ENCODE measurements at regions of chr1 and their contacts with region 1.

Region 1: GRCh38 chr1:235971571-235972310 is 93.1 kb downstream of the NID1 start:
- DNase-seq: peak; percentile 88
- H3K4me3 Mint-ChIP-seq: peak overlapping the region; percentile 2
- H3K27ac Mint-ChIP-seq: no peak overlapping the region
- H3K4me1 Mint-ChIP-seq: peaks cover 19% of the 10 kb centered on the region
- H3K27me3 Mint-ChIP-seq: no peaks in the 10 kb centered on the region
- CTCF ChIP-seq: peak; percentile 83

Region 2: DNA sequence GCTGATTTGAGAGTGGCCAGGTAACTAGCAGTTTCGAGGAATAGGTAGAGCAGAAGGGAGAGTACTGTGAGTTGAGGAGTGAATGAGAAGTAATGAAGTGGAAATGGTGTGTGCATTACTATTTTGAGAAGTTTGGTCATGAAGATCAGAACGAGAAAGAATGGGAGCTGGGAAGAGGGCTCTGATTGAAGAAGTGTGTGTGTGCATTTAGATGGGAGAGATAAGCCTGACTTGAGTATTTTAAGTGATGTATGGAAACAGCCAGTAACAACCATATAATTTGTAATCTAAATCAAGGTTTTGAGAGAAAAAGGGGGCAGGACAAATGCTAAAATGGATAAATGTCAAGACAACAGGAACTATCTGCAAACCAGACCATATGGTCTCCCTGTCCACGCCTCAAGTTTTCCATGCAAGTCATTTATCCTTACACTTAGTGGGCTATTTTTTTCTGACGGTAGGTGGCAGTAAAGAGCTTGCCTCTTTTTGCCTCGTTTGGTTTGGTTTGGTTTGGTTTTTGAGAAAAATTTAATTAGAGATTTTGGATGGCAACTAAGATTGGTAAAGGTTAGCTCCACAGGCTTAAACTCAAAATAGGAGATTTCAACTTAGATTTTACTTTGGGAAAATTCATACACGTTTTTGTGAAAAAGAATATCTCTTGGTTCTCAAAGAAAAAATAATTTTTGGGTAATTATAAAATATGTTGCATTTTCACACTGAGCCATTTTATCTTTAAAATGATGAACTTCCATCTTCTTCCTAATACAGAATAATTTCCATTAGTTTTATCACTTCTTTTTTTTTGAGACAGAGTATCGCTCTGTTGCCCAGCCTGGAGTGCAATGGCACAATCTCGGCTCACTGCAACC is 458.0 kb before region 1 on chr1:
- CTCF ChIA-PET with region 1: interaction called, 4 read pairs
- intact Hi-C with region 1: loop called (anchors 2 kb)
- DNase-seq: peak; percentile 69
- H3K4me3 Mint-ChIP-seq: no peak overlapping the region
- H3K27ac Mint-ChIP-seq: no peak overlapping the region
- H3K4me1 Mint-ChIP-seq: peaks cover 7% of the 10 kb centered on the region
- H3K27me3 Mint-ChIP-seq: peaks cover 14% of the 10 kb centered on the region
- CTCF ChIP-seq: peak; percentile 83

Region 3: DNA sequence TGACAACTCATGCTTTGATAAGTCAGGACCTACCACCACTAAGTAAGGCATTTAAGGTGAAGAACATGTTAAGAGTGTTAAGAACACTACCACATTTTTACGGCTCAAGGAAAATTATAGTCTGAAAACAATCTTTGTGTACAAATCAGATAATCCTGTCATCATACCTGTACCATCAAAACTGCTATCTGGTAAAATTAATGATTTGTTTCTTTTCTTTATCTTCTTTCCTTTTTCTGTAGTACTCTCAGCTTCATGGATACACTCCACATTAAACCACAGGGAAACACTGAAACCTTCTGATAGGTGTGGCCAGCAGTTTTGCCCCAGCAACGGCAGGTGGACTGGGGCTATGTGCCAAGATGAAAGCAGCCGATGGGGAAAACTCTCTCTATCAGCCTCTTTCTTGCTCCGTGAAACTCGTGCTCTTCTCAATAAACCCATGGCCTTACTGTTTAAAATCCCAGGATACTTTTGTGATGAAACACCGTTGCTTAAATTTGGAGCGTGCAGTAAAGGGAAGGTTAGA is 180.1 kb before region 1 on chr1:
- CTCF ChIA-PET with region 1: interaction called, 4 read pairs
- intact Hi-C with region 1: loop called (anchors 2 kb)
- DNase-seq: peak; percentile 11
- H3K4me3 Mint-ChIP-seq: no peak overlapping the region
- H3K27ac Mint-ChIP-seq: no peak overlapping the region
- H3K4me1 Mint-ChIP-seq: peaks cover 10% of the 10 kb centered on the region
- H3K27me3 Mint-ChIP-seq: no peaks in the 10 kb centered on the region
- CTCF ChIP-seq: no peak

Region 4: DNA sequence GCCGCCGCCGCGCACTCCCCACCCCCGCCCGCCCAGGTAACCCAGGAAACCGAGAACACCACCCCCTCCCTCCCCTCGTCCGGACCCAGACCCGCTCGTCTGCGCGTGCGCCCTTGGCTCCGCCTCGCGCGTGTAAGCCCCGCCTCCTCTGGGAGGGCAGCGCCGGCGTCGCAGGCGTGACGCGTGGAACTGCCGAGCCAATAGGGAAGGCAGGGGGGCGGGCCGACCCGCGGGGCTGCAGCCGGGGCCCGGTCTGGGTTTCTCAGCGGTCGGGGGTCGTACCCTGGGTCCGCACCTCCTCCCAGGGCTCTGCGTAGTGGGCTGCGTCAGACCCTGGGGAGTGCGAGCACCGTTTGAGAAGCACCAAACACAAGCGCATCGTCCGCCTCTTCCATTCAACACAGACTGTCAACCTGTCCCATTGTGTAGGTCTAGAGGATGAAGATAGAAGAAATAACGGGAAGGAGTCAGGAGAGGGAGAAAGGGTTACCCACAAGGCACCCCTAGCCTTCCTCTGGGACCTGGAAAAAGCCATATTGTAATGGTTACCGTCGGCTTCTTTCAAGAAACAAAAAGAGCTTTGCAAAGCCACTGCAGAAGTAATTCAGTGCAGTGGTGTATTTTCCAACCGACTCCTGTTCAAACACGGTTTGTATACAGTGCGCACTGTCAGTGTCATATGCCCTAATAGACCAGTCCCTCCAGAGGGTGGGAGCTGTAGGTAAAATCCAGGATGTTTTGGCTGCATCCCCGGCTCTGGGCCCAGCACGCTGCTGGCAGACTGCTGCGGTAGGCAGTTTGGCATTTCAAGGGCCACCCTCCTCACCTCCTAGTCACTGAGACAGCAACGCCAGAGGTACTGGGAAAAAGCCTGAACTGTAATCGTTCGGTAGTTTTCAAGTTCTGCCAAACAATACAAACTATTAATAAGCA is 104.6 kb before region 1 on chr1:
- CTCF ChIA-PET with region 1: interaction called, 28 read pairs
- intact Hi-C with region 1: loop called (anchors 1 kb)
- DNase-seq: peak; percentile 99
- H3K4me3 Mint-ChIP-seq: peak overlapping the region; percentile 92
- H3K27ac Mint-ChIP-seq: peak overlapping the region; percentile 53
- H3K4me1 Mint-ChIP-seq: peaks cover 13% of the 10 kb centered on the region
- H3K27me3 Mint-ChIP-seq: no peaks in the 10 kb centered on the region
- CTCF ChIP-seq: no peak

Region 5: DNA sequence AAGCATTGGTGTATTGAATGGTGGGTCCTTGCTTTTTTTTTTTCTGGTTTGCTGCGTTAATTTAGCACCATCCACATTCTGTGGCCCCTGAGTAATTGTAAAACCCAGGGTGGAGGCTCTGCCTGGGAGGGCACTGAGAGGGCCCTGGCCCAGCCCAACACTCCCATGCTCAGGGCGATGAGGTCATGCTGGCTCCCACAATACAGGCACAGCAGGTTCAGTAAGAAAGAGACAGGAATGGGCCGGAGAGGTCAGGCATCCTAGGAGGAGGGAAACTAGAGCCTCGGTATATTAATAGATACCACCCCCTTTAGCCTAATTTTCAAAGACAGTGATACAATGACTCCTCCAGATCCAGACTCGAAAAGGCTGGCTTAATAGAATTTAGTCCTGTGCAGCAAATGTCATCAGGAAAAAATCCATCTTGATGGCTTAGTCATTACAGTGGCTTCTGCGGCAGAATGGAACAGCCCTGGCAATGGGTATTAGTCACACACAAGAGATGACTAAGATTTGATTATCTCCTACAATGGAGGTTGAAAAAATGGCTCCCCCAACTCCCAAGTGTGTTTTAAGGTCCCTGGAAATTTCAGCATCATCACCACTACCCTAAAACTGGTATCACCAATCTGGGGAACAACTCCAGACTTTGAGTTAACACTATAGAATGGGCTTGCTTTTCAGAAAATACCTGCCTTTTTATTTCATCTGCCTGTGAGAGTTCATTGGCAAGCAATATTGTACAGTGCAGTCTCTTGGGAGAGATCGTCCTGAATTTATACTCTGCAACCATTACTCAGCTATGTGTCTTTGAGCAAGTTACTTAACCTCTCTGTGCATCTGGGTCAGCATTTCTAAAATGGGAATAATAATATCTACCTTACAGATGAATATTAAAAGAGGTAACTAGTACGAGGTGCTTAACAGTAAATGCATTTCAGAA is 61.1 kb before region 1 on chr1:
- CTCF ChIA-PET with region 1: interaction called, 3 read pairs
- intact Hi-C with region 1: loop called (anchors 5 kb)
- DNase-seq: peak; percentile 88
- H3K4me3 Mint-ChIP-seq: peak overlapping the region; percentile 43
- H3K27ac Mint-ChIP-seq: peak overlapping the region; percentile 92
- H3K4me1 Mint-ChIP-seq: peaks cover 44% of the 10 kb centered on the region
- H3K27me3 Mint-ChIP-seq: no peaks in the 10 kb centered on the region
- CTCF ChIP-seq: no peak